ENCODE measurements at regions of chr11 and their contacts with region 1.

Region 1: DNA sequence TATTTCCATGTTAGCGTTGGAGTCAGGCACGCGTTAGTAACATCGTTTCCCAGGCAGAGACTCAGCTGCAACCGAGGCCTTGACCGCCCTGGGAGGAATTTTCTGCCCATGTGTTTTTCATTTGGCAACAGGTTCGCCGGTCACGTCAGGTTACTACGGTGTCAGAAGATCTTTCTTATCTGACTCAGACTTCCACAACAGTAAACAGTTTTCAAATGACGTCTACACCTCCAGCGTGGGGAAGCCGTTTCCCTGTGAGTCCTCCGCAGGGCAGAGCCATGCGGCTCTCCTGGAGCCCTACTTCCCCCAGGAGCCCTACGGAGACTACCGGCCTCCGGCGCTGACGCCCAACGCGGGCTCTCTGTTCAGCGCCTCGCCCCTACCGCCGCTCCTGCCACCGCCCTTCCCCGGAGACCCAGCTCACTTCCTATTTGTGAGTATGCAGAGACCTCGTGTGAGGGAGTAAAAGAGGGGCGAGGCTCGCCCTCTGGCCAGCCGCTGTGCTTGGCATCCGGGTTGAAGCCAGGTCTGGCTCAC is 14.3 kb upstream of the POU2AF3 start:
- DNase-seq: no peak
- ATAC-seq: no peak
- H3K4me3 ChIP-seq: no peak overlapping the region
- H3K27ac ChIP-seq: no peak overlapping the region
- H3K4me1 ChIP-seq: no peaks in the 10 kb centered on the region
- CTCF ChIP-seq: no peak
- EP300 ChIP-seq: no peak
- POLR2A ChIP-seq: no peak
- RAD21 ChIP-seq: no peak

Region 2: GRCh38 chr11:111185266-111185665 is 98.7 kb before region 1 on chr11:
- CTCF ChIA-PET with region 1: no interaction called
- POLR2A ChIA-PET with region 1: no interaction called
- DNase-seq: no peak
- ATAC-seq: no peak
- H3K4me3 ChIP-seq: no peak overlapping the region
- H3K27ac ChIP-seq: no peak overlapping the region
- H3K4me1 ChIP-seq: no peaks in the 10 kb centered on the region
- CTCF ChIP-seq: no peak
- EP300 ChIP-seq: no peak
- POLR2A ChIP-seq: no peak
- RAD21 ChIP-seq: no peak

Region 3: DNA sequence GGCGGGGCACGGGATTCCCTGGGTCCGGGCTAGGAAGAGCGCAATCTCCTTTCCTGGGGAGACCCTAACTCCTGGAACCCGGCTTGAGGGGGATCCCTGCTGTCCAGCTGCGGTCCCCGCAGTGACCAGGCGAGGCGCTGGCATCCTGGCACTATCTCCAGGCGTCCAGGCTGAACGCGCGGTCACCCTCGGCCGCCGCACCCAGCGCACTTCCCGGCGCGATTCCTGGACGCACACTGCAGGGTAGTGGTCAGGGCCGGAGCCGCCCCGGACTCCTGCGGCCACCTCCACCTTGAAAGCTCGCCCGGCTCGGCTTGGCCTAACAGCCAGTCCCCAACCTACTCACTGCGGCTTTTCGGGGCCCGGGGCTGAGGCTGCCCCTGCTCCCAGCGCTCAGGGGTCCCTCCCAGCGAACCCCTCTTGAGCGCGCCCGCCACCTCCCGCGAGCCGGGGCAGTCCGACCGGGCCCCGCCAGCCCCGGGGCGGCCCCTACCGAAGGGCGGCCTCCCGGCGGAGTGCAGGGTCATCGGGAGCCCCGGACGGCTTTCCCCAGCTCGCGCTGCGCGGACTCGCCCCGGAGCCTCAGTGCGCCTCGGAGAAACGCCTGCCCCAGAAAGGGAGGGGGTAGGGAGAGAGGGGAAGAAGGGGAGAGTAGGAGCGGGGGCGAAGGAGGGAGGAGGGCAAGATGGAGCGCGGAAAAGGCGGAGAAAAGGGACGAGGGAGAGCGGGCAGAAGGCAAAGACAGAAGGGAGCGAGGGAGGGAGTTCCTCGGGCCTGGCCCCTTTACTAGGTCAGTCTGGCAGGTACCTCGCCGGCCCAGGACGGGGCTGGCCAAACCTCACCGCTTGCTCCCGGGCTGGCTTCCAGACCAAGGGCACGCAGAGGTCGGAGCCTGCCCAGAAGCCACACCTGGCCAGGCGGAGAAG is 15.4 kb after region 1 on chr11:
- CTCF ChIA-PET with region 1: interaction called, 17 read pairs
- POLR2A ChIA-PET with region 1: no interaction called
- DNase-seq: peak; percentile 58 to 60
- ATAC-seq: peak; percentile 95 to 97
- H3K4me3 ChIP-seq: peak overlapping the region; percentile 96
- H3K27ac ChIP-seq: peak overlapping the region; percentile 92 to 97
- H3K4me1 ChIP-seq: peaks cover 17% of the 10 kb centered on the region; the same call in 2 of the 3 replicates
- CTCF ChIP-seq: peak; percentile 37; the same call in 2 of the 3 replicates
- EP300 ChIP-seq: no peak
- POLR2A ChIP-seq: peak; percentile 25; the same call in 1 of the 2 replicates
- RAD21 ChIP-seq: peak; percentile 39 to 56

Region 4: GRCh38 chr11:111310723-111311122 is 26.7 kb after region 1 on chr11:
- CTCF ChIA-PET with region 1: no interaction called
- POLR2A ChIA-PET with region 1: no interaction called
- DNase-seq: no peak
- ATAC-seq: no peak
- H3K4me3 ChIP-seq: no peak overlapping the region
- H3K27ac ChIP-seq: peak overlapping the region in 1 of 2 experiments; percentile 45; a peak in 1 of 6 replicates
- H3K4me1 ChIP-seq: peaks cover 35% of the 10 kb centered on the region
- CTCF ChIP-seq: no peak
- EP300 ChIP-seq: no peak
- POLR2A ChIP-seq: no peak
- RAD21 ChIP-seq: no peak

Region 5: GRCh38 chr11:111422494-111423249 is 138.7 kb after region 1 on chr11:
- CTCF ChIA-PET with region 1: interaction called, 72 read pairs
- POLR2A ChIA-PET with region 1: interaction called, 6 read pairs
- DNase-seq: peak; percentile 6 to 55
- ATAC-seq: peak; percentile 93 to 98
- H3K4me3 ChIP-seq: no peak overlapping the region
- H3K27ac ChIP-seq: no peak overlapping the region
- H3K4me1 ChIP-seq: no peaks in the 10 kb centered on the region
- CTCF ChIP-seq: peak; percentile 59
- EP300 ChIP-seq: no peak
- POLR2A ChIP-seq: no peak
- RAD21 ChIP-seq: peak; percentile 87 to 91

Region 6: GRCh38 chr11:111429066-111429506 is 145.1 kb after region 1 on chr11:
- CTCF ChIA-PET with region 1: interaction called, 72 read pairs
- POLR2A ChIA-PET with region 1: no interaction called
- DNase-seq: peak in 1 of 2 experiments; percentile 63
- ATAC-seq: peak in 1 of 2 experiments; percentile 72; a peak in 3 of 6 replicates
- H3K4me3 ChIP-seq: no peak overlapping the region
- H3K27ac ChIP-seq: no peak overlapping the region
- H3K4me1 ChIP-seq: no peaks in the 10 kb centered on the region
- CTCF ChIP-seq: peak; percentile 54
- EP300 ChIP-seq: no peak
- POLR2A ChIP-seq: no peak
- RAD21 ChIP-seq: peak; percentile 27 to 31; a peak in 4 of 5 replicates